ENCODE measurements at regions of chr3 and their contacts with region 1.

Region 1: GRCh38 chr3:185942907-185943759 is 5.3 kb upstream of the TRA2B start:
- DNase-seq: peak; percentile 86
- H3K4me3 ChIP-seq: no peak overlapping the region
- H3K27ac ChIP-seq: peak overlapping the region; percentile 24
- H3K4me1 ChIP-seq: peaks cover 13% of the 10 kb centered on the region
- H3K27me3 ChIP-seq: no peaks in the 10 kb centered on the region
- CTCF ChIP-seq: peak; percentile 99

Region 2: GRCh38 chr3:185954366-185954723 is 11.2 kb after region 1 on chr3:
- CTCF ChIA-PET with region 1: interaction called, 30 read pairs
- POLR2A ChIA-PET with region 1: interaction called, 5 read pairs
- intact Hi-C with region 1: no loop called
- DNase-seq: no peak
- H3K4me3 ChIP-seq: no peak overlapping the region
- H3K27ac ChIP-seq: no peak overlapping the region
- H3K4me1 ChIP-seq: peaks cover 1% of the 10 kb centered on the region
- H3K27me3 ChIP-seq: no peaks in the 10 kb centered on the region
- CTCF ChIP-seq: no peak

Region 3: DNA sequence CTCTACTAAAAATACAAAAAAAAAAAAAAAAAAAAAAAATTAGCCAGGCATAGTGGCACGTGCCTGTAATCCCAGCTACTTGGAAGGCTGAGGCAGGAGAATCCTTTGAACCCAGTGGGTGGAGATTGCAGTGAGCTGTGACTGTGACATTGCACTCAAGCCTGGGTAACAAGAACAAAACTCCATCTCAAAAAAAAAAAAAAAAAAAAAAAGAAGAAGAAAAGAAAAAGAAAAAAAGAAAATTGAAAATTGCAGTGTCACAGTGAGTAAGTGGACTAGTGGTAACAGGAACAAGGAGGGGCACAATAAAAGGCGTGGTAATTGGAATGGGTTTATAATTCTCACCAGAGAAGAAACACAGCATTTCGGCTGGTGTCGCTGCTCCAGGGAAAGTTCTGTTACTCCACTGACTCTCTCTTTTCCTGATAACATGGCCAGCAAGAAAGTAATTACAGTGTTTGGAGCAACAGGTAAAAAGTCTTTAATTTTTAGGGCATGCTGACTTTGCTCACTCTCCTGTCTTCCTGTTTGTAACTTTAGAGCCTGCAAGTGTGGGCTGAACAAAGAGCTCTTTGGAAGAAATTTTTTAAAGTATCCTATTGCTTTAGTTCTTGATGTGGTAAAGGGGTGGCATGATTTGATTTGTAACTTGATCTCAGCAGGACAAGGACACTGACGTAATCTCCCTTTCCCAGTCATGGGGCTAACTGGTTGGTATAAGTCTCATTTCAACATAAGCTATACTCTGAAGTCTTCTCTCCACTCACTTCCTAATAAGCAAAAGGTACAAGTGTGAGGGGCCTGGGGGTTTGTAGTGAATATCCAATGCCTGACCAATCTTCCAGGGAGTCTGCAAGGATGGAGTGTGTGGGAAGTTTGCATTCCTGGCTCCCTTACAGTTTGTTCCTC is 16.7 kb after region 1 on chr3:
- CTCF ChIA-PET with region 1: interaction called, 30 read pairs
- POLR2A ChIA-PET with region 1: no interaction called
- intact Hi-C with region 1: no loop called
- DNase-seq: peak; percentile 83
- H3K4me3 ChIP-seq: peak overlapping the region; percentile 23
- H3K27ac ChIP-seq: peak overlapping the region; percentile 86
- H3K4me1 ChIP-seq: peaks cover 18% of the 10 kb centered on the region
- H3K27me3 ChIP-seq: no peaks in the 10 kb centered on the region
- CTCF ChIP-seq: no peak

Region 4: GRCh38 chr3:186044973-186045372 is 101.8 kb after region 1 on chr3:
- CTCF ChIA-PET with region 1: no interaction called
- POLR2A ChIA-PET with region 1: no interaction called
- intact Hi-C with region 1: no loop called
- DNase-seq: no peak
- H3K4me3 ChIP-seq: no peak overlapping the region
- H3K27ac ChIP-seq: no peak overlapping the region
- H3K4me1 ChIP-seq: no peaks in the 10 kb centered on the region
- H3K27me3 ChIP-seq: no peaks in the 10 kb centered on the region
- CTCF ChIP-seq: no peak

Region 5: DNA sequence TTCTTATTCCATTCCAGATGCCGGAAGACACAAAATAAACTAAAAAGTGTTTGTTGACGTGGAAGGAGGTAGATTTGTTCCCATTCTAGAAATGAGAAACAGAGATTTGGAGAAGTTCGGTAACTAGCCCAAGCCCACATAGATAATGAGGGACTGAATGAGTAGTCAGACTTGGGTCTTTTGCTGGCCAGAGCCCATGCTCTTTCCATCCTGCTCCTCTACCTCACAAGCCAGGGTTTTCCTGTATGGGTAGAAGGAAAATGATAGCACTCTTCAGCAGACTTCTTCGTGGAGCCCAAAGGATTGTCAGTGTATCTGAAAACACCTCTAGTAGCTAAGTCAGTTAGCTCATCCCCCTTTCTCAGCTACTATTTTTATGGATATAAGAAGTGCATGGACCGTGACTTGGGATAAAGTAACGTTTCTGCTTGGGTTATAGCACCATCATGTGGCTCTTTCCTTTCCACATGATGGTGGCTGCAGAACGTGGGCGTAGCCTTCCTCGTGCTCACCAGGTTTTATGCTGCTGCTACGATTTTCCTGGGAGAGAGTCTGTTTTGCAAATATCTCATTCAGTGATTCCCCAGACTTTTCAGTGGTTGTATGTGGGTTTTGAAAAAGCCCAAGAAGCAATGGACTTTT is 334.3 kb after region 1 on chr3:
- CTCF ChIA-PET with region 1: interaction called, 12 read pairs
- POLR2A ChIA-PET with region 1: no interaction called
- intact Hi-C with region 1: no loop called
- DNase-seq: peak; percentile 83
- H3K4me3 ChIP-seq: no peak overlapping the region
- H3K27ac ChIP-seq: no peak overlapping the region
- H3K4me1 ChIP-seq: no peaks in the 10 kb centered on the region
- H3K27me3 ChIP-seq: no peaks in the 10 kb centered on the region
- CTCF ChIP-seq: peak; percentile 82

Region 6: DNA sequence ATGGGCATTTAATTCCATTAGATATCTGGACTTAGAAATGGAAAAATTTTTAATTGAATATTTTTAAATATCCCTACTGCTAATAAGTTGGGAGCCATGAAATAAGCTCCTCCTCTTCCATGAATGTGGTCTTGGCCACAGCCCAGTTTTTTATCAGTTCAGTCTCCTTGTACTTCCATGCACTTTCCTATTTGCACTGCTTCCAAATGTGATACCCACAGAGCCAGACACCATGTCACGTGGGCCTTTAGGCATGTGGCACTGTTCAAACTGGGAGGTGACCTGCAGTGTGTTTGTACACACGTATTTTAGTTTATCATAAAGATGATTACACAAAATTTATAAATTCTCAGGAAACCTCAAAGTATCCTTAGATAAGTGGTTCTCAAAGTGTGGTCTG is 499.0 kb after region 1 on chr3:
- CTCF ChIA-PET with region 1: no interaction called
- POLR2A ChIA-PET with region 1: interaction called, 15 read pairs
- intact Hi-C with region 1: no loop called
- DNase-seq: no peak
- H3K4me3 ChIP-seq: no peak overlapping the region
- H3K27ac ChIP-seq: no peak overlapping the region
- H3K4me1 ChIP-seq: no peaks in the 10 kb centered on the region
- H3K27me3 ChIP-seq: no peaks in the 10 kb centered on the region
- CTCF ChIP-seq: no peak

Region 7: GRCh38 chr3:186540221-186540834 is 597.2 kb after region 1 on chr3:
- CTCF ChIA-PET with region 1: interaction called, 10 read pairs
- POLR2A ChIA-PET with region 1: no interaction called
- intact Hi-C with region 1: no loop called
- DNase-seq: peak; percentile 86
- H3K4me3 ChIP-seq: no peak overlapping the region
- H3K27ac ChIP-seq: no peak overlapping the region
- H3K4me1 ChIP-seq: peaks cover 9% of the 10 kb centered on the region
- H3K27me3 ChIP-seq: no peaks in the 10 kb centered on the region
- CTCF ChIP-seq: peak; percentile 86